ENCODE measurements at regions of chr20 and their contacts with region 1.

Region 1: GRCh38 chr20:35146920-35147574 is at the start of gene EDEM2:
- DNase-seq: peak; percentile 94 to 97 (median 96)
- ATAC-seq: peak; percentile 93
- H3K4me3 ChIP-seq: peak within 1 kb of the TSS; percentile 43 to 57
- H3K27ac ChIP-seq: peak within 1 kb of the TSS; percentile 75 to 91 (median 82)
- H3K4me1 ChIP-seq: peaks cover 25% of the 10 kb centered on the region
- H3K27me3 ChIP-seq: no peaks in the 10 kb centered on the region
- CTCF ChIP-seq: peak in 2 of 7 experiments; percentile 0 to 5
- POLR2A ChIP-seq: peak; percentile 58 to 82 (median 81)
- total RNA-seq, gene EDEM2: 18.1 to 24.6 TPM

Region 2: DNA sequence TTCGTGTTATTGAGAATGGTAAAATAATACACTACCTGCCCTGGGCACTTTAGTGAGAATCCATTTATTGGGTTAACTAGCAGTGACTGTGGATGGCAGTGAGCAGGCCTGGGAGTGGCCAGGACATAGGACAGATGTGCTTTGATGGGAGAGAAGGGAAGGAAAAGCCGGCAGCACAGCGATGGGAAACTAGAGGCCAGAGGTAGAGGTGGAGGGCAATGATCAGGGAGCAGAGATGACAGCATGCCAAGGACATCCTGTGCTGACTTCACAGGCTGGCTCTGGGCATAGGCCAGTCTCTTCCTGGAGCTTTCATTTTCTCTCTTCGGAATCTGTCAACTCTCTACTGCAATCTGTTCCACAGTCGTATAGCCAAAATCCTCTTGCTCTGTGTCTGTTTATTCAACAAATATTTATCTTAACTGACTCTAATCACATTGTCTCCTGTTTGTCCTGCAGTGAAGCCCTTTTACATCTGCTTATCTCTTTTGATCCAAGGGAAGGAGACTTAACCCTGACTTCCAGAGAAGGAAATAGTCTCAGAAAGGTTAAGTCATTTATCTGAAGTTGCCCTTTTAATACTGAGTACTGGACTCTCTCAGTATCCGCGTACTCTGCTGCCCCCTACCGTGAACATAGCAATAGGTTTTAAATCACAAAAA is 61.0 kb after region 1 on chr20:
- intact Hi-C with region 1: loop called (anchors 5 kb)
- DNase-seq: peak; percentile 87
- ATAC-seq: peak; percentile 96
- H3K4me3 ChIP-seq: no peak overlapping the region
- H3K27ac ChIP-seq: peak overlapping the region; percentile 27 to 71 (median 60)
- H3K4me1 ChIP-seq: peaks cover 14% of the 10 kb centered on the region
- H3K27me3 ChIP-seq: no peaks in the 10 kb centered on the region
- CTCF ChIP-seq: peak; percentile 69 to 95 (median 91)
- POLR2A ChIP-seq: no peak

Region 3: DNA sequence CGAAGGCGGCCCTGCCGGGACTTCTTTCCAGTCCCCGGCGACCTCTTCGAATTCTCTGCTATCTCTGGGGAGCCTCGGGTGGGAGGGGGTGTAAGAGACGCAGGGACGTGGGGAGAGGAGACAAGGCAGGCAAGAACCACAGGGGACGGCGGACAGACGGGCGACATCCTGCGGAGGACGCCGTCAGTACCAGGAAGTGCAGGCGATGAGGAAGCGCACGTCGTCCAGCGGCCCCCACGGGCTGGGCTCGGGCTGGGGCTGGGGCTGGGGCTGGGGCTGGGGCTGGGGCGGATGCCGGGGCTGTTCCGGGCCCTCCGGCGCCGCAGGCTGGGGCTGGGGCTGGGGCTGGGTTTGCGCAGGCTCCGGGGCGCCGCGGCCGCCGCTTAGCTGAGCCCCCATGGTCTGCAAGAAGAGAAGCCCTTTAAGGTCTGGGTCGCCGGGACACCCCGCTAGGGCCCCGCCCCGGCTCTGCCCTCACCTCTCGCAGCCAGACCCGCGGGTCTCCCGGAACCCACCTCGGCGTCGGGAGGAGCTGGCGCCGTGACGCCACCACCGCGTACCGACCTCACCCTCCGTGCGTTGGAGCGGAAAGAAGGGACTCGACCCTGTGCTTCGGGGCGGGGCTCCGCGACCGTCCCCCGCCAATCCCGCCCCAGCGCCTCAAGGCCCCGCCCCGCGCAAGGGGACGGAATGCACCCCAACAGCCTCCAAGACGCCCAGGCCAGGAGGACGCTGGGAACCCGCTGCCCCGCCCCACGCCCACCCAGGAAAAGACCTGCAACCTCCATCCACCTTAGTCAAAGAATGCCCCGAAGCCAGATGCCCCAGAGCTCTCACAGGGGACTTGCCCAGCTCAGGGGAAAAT is 130.7 kb after region 1 on chr20 and contains the start of gene MMP24OS:
- intact Hi-C with region 1: loop called (anchors 10 kb)
- DNase-seq: peak; percentile 90 to 92 (median 92)
- ATAC-seq: peak; percentile 94
- H3K4me3 ChIP-seq: peak within 1 kb of the TSS; percentile 57 to 66
- H3K27ac ChIP-seq: peak within 1 kb of the TSS; percentile 81 to 97 (median 90)
- H3K4me1 ChIP-seq: peaks cover 31% of the 10 kb centered on the region
- H3K27me3 ChIP-seq: no peaks in the 10 kb centered on the region
- CTCF ChIP-seq: peak in 3 of 7 experiments; percentile 8 to 17 (median 14)
- POLR2A ChIP-seq: peak; percentile 90 to 96 (median 95)
- total RNA-seq, gene MMP24OS: 20.4 to 27.5 TPM

Region 4: DNA sequence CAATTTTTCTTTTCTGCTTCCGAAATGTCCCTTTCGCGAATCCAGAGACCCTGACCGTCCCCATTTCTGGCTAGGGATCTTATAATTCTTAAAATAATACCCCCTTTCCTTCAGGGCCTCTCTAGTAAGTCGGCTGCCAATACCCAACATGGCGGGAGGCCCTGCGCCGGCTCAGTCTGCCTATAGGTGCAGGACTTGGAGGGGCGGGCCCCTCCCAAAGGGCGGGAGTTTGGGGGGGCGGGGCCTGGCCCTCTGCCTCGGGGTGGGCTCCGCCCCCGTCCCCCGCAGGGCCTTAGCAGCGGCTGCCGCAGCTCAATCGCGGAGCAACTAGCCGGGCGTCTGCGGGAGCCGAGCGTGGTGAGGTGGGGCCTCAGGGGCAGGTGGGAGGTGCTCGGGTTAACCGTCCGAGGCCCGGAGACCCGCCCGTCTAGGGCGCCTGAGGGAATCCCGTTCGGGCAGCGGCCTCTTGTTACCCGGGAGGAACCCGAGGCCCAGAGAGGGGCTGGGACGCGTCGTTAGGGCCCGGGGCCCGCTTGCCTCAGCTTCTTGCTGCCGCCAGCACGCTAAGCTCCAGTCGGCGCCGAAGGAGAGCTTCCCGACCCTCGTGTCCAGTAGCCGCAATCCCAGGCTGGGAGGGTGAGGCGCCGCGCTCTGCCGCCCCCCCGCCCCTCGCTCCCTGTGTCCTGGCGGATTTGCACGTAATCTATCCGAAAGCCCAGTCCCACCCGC is 308.0 kb after region 1 on chr20 and contains the start of gene CEP250:
- intact Hi-C with region 1: loop called (anchors 10 kb)
- DNase-seq: peak; percentile 94 to 96 (median 96)
- ATAC-seq: peak; percentile 95
- H3K4me3 ChIP-seq: peak within 1 kb of the TSS; percentile 62 to 70
- H3K27ac ChIP-seq: peak within 1 kb of the TSS; percentile 79 to 98 (median 96)
- H3K4me1 ChIP-seq: peaks cover 18% of the 10 kb centered on the region
- H3K27me3 ChIP-seq: no peaks in the 10 kb centered on the region
- CTCF ChIP-seq: peak in 1 of 7 experiments; percentile 0
- POLR2A ChIP-seq: peak; percentile 36 to 55 (median 38)
- total RNA-seq, gene CEP250: 7.8 to 27.0 TPM